ENCODE measurements at regions of chr19 and their contacts with region 1.

Region 1: DNA sequence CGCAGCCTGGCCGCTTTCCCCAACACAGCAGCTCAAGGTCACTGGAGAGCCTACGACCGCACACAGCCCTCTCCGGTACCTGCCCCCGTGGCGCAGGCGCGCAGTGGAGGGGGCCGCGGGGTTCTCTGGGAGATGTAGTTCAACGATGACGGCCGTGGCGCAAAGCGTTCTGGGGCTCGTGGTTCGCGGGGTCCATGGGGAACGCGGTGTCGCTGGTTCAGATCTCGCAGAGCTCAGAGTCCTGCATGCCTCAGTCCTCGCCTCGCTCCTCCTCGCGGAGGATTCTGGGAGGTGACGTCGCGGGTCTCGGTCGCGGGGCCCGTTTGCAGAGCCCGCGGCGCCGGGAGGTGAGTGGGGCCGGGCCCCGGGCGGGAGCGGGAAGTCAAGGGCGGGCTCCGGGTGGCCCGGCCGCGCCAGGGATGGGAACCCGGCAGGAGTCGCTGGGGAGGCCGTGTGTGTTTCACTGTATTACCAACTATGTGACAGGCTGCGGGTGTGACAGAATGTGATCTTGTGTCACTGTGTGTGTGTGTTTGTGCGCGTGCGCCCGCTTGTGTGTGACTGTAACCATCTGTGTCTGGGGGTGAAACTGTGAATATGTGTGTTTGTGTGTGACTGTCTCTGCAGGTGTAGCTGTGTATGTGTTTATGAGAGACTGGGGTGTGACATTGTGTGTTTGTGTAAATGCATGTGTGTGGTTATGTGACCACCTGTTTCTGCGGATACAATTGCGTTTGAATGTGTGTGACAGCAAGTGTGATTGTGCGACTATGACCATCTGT is at the start of gene ZNF527:
- DNase-seq: peak; percentile 90 to 98
- H3K4me3 ChIP-seq: peak within 1 kb of the TSS; percentile 66 to 80
- H3K27ac ChIP-seq: peak within 1 kb of the TSS; percentile 85 to 87
- H3K4me1 ChIP-seq: no peaks in the 10 kb centered on the region
- H3K27me3 ChIP-seq: no peaks in the 10 kb centered on the region
- CTCF ChIP-seq: peak in 1 of 3 experiments; percentile 9
- total RNA-seq, gene ZNF527: 0.32 TPM

Region 2: GRCh38 chr19:36915992-36916830 is 454.9 kb before region 1 on chr19 and contains the starts of genes ZNF568 and ZNF829:
- intact Hi-C with region 1: loop called (anchors 1 kb)
- DNase-seq: peak; percentile 42 to 93
- H3K4me3 ChIP-seq: peak within 1 kb of the TSS; percentile 80 to 91
- H3K27ac ChIP-seq: peak within 1 kb of the TSS; percentile 93 to 98
- H3K4me1 ChIP-seq: peaks cover 0 to 10% of the 10 kb centered on the region in 2 donors
- H3K27me3 ChIP-seq: no peaks in the 10 kb centered on the region
- CTCF ChIP-seq: peak; percentile 57 to 73 (median 59)
- total RNA-seq, gene ZNF568: 2.4 TPM
- total RNA-seq, gene ZNF829: 1.2 TPM

Region 3: DNA sequence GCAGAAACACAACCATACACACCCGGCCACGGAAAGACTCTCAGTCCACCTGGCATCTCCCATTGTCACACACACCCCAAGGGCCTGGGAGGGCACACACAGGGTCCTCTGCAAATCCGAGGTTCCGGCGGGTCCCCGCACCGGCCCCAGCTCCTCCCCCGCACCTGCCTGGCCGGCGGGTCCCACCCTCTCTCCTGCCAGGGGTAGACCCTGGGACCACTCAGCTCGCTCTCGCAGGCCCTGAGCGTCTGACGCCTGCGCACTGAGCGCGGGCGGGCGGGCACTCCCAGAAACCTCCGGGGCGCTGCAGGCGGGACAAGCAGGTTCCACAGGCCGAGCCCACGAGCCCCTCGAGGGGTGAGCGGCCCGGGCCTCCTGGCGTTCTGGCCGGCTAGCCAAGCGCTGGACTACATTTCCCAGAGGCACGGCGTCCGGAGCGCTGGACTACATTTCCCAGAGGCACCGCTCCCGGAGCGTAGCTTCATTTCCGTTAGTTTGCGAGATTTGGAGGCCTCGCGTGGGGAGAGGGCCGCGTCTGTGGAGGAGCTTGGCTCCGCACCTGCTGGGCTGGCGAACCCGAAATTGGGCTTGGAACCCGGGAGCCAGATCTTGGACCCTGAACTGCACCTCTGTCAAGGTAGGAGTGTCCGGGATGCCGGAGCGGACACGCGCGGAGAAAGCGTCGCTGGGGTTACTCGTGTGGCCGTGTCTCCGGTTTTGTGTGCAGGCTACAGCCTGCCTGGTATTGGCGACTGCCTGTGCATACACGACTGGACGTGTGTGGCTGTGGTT is 292.9 kb before region 1 on chr19 and contains the start of gene ZNF420:
- intact Hi-C with region 1: loop called (anchors 1 kb)
- DNase-seq: peak; percentile 77 to 96
- H3K4me3 ChIP-seq: peak within 1 kb of the TSS; percentile 84 to 87
- H3K27ac ChIP-seq: peak within 1 kb of the TSS; percentile 87 to 91
- H3K4me1 ChIP-seq: peaks cover 6 to 7% of the 10 kb centered on the region in 2 donors
- H3K27me3 ChIP-seq: no peaks in the 10 kb centered on the region
- CTCF ChIP-seq: no peak
- total RNA-seq, gene ZNF420: 69.9 TPM

Region 4: DNA sequence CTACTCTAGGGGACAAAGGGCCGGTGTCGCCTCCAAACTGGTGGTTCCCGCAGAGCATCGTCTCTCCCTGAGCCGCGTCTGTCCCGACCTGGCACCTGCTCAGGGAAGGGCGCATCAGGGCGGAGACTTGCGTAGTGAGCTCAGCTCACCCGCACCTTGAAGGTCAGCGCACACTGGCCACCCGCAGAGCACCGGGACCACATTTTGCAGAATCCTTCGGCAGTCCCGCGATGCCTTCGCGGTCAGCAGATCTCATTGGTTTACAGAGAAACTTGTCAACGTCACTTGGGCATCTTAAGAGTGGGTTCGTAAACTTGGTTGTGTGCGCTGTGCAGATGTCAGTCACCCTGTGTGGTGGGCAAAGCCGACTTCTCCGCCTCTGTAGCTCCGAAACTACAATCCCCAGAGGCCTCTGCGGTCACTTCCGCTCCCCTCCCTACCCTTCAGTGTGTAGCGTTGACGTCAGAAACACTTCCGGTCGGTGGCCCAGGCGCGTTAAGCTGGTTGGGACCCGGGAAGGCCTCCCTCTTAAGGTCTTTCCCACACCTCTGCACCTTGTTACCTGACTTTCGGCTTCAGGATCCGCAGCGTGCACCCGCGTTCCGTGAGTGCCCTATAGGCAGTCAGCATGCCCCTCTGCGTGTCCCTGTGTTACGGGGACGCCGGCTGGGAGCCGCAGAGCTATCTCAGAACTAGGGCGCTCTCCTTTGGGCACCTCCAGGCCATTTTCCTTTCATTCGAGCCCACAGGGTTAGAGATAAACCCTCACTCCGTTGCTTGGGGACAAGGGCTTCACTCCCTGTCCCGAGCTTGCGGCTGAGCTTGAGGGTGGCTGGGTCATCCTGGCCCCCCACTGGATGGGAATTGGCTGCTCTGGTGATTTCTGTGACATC is 36.6 kb before region 1 on chr19:
- intact Hi-C with region 1: loop called (anchors 1 kb)
- DNase-seq: peak; percentile 69 to 95
- H3K4me3 ChIP-seq: peak overlapping the region; percentile 65 to 67
- H3K27ac ChIP-seq: peak overlapping the region; percentile 57 to 77
- H3K4me1 ChIP-seq: peaks cover 0 to 12% of the 10 kb centered on the region in 2 donors
- H3K27me3 ChIP-seq: no peaks in the 10 kb centered on the region
- CTCF ChIP-seq: no peak

Region 5: DNA sequence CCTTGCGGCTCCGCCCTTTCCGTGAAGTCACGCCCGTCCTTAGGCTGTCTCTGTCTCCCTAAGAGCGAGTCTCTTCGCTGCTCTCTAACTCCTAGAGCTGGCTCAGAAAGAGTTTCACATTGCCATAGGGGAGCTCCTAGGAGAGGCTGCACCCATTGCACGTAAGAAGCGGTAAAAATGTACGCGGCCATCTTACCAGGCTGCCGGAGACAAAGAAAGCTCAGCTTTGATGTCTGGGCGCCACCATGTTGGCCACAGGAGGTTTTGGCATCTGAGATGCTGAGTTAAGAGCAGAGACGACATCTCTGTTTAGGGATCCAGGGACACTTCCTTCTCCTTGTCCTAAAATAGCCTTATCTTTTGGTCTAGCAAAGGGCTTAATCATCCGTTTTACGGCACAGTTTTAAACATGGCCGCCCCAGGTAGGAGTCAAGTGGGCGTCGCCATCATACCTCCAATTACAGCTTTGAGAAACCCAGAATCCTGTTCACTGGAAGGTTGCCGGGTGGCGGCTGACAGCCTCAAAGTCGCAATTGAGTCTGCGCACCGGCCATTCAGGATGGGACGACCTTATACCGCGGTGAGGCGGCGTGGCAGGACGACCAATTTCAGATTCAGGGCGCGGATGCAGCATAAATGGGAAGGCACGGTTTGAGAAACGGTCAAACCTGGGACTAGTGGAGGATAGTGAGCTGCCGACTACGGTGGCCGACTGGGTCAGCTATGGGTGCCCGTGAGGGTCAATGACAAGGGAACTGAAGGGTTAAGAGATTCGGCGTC is 135.5 kb after region 1 on chr19 and contains the start of gene ZNF793:
- intact Hi-C with region 1: loop called (anchors 1 kb)
- DNase-seq: peak; percentile 34 to 89
- H3K4me3 ChIP-seq: peak within 1 kb of the TSS; percentile 75 to 88
- H3K27ac ChIP-seq: peak within 1 kb of the TSS; percentile 82 to 98
- H3K4me1 ChIP-seq: peaks cover 0 to 4% of the 10 kb centered on the region in 2 donors
- H3K27me3 ChIP-seq: no peaks in the 10 kb centered on the region
- CTCF ChIP-seq: no peak
- total RNA-seq, gene ZNF793: 3.6 TPM

Region 6: DNA sequence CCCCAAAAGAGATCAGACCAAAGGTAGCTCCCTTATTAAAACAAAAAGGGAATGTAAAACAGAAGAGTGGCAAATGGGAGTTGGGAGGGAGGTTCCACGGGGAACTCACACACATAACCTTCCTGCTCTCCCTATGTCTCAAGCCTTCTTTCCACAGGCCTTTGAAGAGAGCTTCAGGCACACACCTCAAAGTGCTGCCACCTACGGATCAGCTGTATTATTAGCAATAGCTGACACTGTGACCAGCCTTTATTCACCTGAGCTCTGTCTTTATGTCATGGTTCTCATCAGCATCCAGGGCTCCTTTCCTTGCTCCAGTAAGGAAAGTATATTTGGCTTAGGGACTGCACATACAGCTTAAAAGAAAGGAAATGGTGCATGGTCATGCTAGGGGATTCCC is 212.3 kb after region 1 on chr19:
- intact Hi-C with region 1: no loop called
- DNase-seq: no peak
- H3K4me3 ChIP-seq: peak overlapping the region in 1 of 2 donors; percentile 7
- H3K27ac ChIP-seq: no peak overlapping the region
- H3K4me1 ChIP-seq: no peaks in the 10 kb centered on the region
- H3K27me3 ChIP-seq: no peaks in the 10 kb centered on the region
- CTCF ChIP-seq: no peak

Measured in ascending aorta (tissue), 2 donors.